Gastrocnemius medialis (tissue), 4 donors: ENCODE measurements at regions of chr10 and their contacts with region 1.

Region 1: DNA sequence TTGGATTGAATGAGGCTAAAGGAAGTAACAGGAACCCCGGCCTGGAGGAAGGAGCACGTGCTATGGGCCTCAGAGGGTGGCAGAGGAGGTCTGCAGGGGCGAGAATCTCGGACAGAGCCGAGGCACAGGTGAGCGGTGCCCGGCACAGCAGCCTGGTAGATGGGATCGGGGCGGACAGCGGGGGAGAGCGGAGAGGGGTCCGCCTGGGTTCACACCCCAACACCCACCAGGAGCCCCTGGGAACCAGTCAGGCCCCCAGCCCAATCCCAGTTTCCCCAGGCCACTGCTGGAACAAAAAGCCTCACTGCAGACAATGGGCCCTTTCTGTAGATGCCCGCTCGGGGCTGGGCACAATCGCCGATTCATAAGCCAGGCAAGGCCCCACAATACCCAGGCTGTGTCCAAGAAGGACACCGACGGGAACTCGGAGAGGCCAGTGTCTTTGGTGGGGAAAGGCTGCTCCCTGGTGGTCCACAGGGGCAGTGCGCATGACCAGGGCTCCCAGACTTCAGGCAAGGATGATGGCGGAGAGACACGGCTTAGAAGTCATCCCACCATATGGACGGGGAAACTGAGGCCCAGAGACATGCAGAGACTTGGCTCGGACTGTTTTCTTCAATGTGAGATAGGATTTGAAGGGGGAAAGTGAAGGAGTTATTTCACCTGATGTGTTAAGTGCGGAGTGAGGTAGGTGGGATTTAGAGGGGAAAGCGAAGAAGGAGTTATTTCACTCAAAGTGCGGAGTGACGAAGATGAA is 106.9 kb upstream of the GPR26 start:
- DNase-seq: peak; percentile 16 to 34
- ATAC-seq: peak; percentile 30 to 73
- H3K4me3 ChIP-seq: no peak overlapping the region
- H3K27ac ChIP-seq: no peak overlapping the region
- H3K4me1 ChIP-seq: no peaks in the 10 kb centered on the region
- H3K27me3 ChIP-seq: peaks cover 0 to 5% (median 0%) of the 10 kb centered on the region in 3 donors
- CTCF ChIP-seq: peak; percentile 81 to 92 (median 89)
- POLR2A ChIP-seq: no peak

Region 2: GRCh38 chr10:123043409-123043925 is 515.8 kb before region 1 on chr10:
- in situ Hi-C with region 1: no loop called
- intact Hi-C with region 1: loop called (anchors 10 kb)
- DNase-seq: no peak
- ATAC-seq: no peak
- H3K4me3 ChIP-seq: no peak overlapping the region
- H3K27ac ChIP-seq: no peak overlapping the region
- H3K4me1 ChIP-seq: peaks cover 0 to 3% of the 10 kb centered on the region in 2 donors
- H3K27me3 ChIP-seq: no peaks in the 10 kb centered on the region
- CTCF ChIP-seq: peak in 1 of 5 experiments; percentile 31
- POLR2A ChIP-seq: no peak

Region 3: DNA sequence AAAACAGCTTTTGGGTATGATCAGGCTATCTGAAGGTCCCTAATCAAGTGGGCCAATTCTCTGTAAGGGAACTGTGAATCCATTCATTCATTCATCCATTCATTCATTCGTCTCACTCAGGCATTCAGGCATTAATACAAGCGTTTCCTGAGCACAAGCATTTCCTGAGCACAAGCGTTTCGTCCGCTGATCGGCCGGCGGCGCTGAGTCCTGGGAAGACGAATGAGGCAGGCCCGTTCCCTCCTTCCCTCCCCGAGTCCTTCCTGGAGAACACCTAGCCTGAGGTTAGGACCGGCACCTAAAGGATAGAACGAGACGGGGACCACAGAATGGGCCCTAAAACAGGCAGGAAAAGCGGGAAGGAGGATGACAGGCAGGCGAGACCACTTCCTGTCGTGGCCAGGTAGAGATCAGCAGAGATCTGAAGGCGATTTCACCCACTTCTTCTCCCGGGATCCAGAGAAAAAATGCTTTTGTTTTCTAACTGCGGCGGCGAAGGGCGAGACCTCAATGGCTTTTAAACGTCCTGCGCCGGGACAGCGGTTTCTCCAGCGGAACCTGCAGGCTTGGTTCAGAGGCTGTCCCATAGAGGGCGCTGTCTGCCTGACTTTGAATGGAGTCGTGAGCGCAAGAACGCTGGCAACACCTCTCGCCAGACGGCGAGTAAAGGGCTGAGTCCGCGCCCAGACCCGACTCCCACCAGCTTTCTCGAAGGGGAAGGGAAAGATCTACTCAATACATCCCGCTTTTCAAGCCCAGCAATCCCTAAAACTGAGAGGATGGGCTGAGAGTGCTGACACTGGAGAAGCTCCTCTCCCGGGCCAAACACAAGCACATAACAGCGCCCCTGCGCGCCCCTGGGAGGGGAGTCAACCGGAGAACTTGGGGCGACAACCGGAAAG is 426.4 kb before region 1 on chr10:
- in situ Hi-C with region 1: loop called (anchors 5 to 10 kb)
- intact Hi-C with region 1: loop called (anchors 1 kb)
- DNase-seq: peak; percentile 39 to 62
- ATAC-seq: peak; percentile 84
- H3K4me3 ChIP-seq: peak overlapping the region in 3 of 4 donors; percentile 15 to 31 (median 29)
- H3K27ac ChIP-seq: no peak overlapping the region
- H3K4me1 ChIP-seq: peaks cover 24 to 26% of the 10 kb centered on the region in 2 donors
- H3K27me3 ChIP-seq: peaks cover 92 to 97% (median 97%) of the 10 kb centered on the region in 3 donors
- CTCF ChIP-seq: peak; percentile 62 to 86 (median 80)
- POLR2A ChIP-seq: no peak